Adrenal gland (tissue), 19 donors: ENCODE measurements at regions of chr5 and their contacts with region 1.

Region 1: GRCh38 chr5:143403593-143404415 is at the start of gene NR3C1:
- DNase-seq: peak; percentile 82 to 90 (median 84)
- H3K4me3 ChIP-seq: peak within 1 kb of the TSS; percentile 84 to 98 (median 92)
- H3K27ac ChIP-seq: peak within 1 kb of the TSS; percentile 75 to 97 (median 95)
- H3K4me1 ChIP-seq: peaks cover 8 to 20% of the 10 kb centered on the region in 2 donors
- H3K27me3 ChIP-seq: no peaks in the 10 kb centered on the region
- CTCF ChIP-seq: peak in 5 of 6 experiments; percentile 38 to 70 (median 55)
- POLR2A ChIP-seq: peak in 1 of 2 donors; percentile 52
- total RNA-seq, gene NR3C1: 16.7 to 35.5 (median 27.7) TPM

Region 2: DNA sequence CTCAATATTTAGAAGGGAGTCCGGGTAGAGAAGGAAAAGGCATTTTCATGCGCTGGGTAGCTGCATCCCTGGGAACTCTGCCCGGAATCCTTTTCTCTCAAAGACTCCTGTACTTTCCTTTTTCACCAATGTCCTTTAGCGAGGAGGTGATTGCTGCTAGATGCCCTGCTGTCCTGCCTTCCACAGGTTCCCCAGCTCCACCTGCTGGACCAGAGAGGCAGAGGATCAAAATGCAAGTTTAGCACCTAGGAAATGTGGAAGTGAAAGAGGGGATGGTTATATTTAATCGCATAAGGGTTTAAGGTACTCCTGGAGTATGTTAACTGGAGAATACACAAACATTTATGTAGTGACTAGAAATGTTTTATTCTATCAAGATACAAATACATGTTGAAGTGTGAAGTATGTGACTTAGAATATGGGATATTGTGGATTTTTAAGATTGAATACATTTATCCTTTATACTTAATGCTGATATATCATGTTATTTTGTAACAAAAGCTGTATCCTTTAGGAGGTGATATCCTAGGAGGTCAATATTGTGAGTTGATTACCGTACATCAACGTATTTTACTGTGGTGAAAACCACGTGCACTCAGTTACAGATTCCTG is 487.9 kb before region 1 on chr5:
- intact Hi-C with region 1: no loop called
- DNase-seq: peak in 4 of 7 donors; percentile 18 to 40 (median 28)
- H3K4me3 ChIP-seq: no peak overlapping the region
- H3K27ac ChIP-seq: no peak overlapping the region
- H3K4me1 ChIP-seq: no peaks in the 10 kb centered on the region
- H3K27me3 ChIP-seq: no peaks in the 10 kb centered on the region
- CTCF ChIP-seq: peak in 5 of 6 experiments; percentile 16 to 41 (median 29)
- POLR2A ChIP-seq: no peak

Region 3: GRCh38 chr5:143002459-143003328 is 401.1 kb before region 1 on chr5:
- intact Hi-C with region 1: loop called in 1 of 2 experiments (anchors 10 kb)
- DNase-seq: peak in 5 of 7 donors; percentile 23 to 56 (median 35)
- H3K4me3 ChIP-seq: no peak overlapping the region
- H3K27ac ChIP-seq: peak overlapping the region in 2 of 5 donors; percentile 53 to 63
- H3K4me1 ChIP-seq: peaks cover 6 to 30% of the 10 kb centered on the region in 2 donors
- H3K27me3 ChIP-seq: no peaks in the 10 kb centered on the region
- CTCF ChIP-seq: peak; percentile 26 to 64 (median 54)
- POLR2A ChIP-seq: no peak